ENCODE measurements at regions of chr7 and their contacts with region 1.

Region 1: DNA sequence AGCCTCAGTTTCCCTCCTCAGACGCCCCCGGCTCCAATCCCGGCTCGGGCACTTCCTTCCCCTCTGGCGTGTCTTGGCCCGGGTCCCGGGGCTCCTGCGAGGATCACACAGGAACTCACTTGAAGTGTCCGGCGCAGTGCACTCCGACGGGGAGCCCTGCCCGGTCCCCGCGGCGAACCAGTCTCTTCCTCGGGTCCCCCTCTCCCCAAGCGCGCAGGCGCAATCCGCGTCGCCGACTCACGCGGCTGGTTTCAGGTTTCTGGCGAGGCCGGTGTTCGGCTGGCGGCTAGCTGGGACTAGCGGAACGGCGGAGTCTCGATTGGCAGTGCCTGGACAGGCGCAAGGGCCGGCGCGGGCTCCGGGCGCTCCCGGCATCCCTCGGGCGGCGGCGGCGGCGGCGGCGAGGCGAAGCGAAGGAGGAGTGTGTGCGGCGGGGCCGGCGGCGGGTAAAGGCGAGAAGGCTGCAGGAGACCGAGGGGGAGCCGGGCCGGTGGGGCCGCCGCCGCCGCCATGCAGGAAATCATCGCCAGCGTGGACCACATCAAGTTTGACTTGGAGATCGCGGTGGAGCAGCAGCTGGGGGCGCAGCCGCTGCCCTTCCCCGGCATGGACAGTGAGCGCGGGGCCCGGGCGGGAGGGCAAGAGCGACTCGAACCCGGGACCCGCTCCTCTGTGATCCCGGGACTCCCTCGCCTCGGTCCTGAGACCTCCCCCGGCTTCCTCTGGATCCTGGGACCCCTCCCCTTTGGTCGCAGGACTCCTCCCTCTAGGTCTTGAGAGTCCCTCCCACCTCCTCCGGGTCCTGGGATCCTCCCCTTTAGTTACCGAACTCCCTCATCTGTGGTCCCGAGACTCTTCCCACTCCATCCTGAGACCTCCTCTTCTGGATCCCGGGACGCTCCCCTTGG is at the starts of genes CPSF4 and PTCD1:
- DNase-seq: peak; percentile 95 to 98 (median 97)
- ATAC-seq: peak; percentile 89 to 97 (median 96)
- H3K4me3 ChIP-seq: peak within 1 kb of the TSS; percentile 72 to 100 (median 97)
- H3K27ac ChIP-seq: peak within 1 kb of the TSS in 11 of 12 donors; percentile 79 to 93 (median 89)
- H3K4me1 ChIP-seq: peaks cover 0 to 45% (median 30%) of the 10 kb centered on the region in 12 donors
- H3K27me3 ChIP-seq: no peaks in the 10 kb centered on the region
- CTCF ChIP-seq: no peak
- POLR2A ChIP-seq: peak in 1 of 2 donors; percentile 59
- total RNA-seq, gene CPSF4: 12.7 to 24.8 (median 16.4) TPM
- total RNA-seq, gene PTCD1: 2.1 to 9.0 (median 3.9) TPM

Region 2: GRCh38 chr7:99255463-99255862 is 183.4 kb before region 1 on chr7:
- intact Hi-C with region 1: no loop called
- DNase-seq: peak in 1 of 5 donors; percentile 33
- ATAC-seq: no peak
- H3K4me3 ChIP-seq: no peak overlapping the region
- H3K27ac ChIP-seq: no peak overlapping the region
- H3K4me1 ChIP-seq: no peaks in the 10 kb centered on the region
- H3K27me3 ChIP-seq: peaks cover 0 to 6% (median 0%) of the 10 kb centered on the region in 9 donors
- CTCF ChIP-seq: no peak
- POLR2A ChIP-seq: no peak

Region 3: DNA sequence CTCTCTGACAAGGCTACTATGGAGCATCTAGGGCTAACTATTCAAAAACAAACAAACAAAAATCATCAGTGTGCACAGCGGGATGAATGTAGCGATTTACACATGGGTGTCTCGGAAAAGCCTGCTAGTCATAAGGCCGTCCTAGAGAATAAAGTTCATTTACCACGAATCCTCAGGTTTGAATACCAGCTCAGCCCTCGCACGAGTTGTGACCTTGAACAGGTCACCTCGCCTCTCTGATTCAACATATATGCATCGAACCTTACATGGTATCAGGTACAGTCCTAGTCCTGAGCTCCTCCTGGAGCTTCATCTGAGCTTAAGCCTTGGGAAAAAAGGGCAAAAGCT is 26.6 kb after region 1 on chr7:
- intact Hi-C with region 1: loop called in 1 of 10 experiments (anchors 2 kb)
- DNase-seq: no peak
- ATAC-seq: peak in 2 of 4 donors; percentile 4 to 25
- H3K4me3 ChIP-seq: peak overlapping the region; percentile 64 to 96 (median 82)
- H3K27ac ChIP-seq: peak overlapping the region; percentile 77 to 96 (median 92)
- H3K4me1 ChIP-seq: peaks cover 8 to 58% (median 29%) of the 10 kb centered on the region in 12 donors
- H3K27me3 ChIP-seq: no peaks in the 10 kb centered on the region
- CTCF ChIP-seq: no peak
- POLR2A ChIP-seq: no peak

Region 4: GRCh38 chr7:99489235-99489634 is 50.4 kb after region 1 on chr7:
- intact Hi-C with region 1: no loop called
- DNase-seq: no peak
- ATAC-seq: no peak
- H3K4me3 ChIP-seq: no peak overlapping the region
- H3K27ac ChIP-seq: no peak overlapping the region
- H3K4me1 ChIP-seq: no peaks in the 10 kb centered on the region
- H3K27me3 ChIP-seq: no peaks in the 10 kb centered on the region
- CTCF ChIP-seq: no peak
- POLR2A ChIP-seq: no peak

Region 5: DNA sequence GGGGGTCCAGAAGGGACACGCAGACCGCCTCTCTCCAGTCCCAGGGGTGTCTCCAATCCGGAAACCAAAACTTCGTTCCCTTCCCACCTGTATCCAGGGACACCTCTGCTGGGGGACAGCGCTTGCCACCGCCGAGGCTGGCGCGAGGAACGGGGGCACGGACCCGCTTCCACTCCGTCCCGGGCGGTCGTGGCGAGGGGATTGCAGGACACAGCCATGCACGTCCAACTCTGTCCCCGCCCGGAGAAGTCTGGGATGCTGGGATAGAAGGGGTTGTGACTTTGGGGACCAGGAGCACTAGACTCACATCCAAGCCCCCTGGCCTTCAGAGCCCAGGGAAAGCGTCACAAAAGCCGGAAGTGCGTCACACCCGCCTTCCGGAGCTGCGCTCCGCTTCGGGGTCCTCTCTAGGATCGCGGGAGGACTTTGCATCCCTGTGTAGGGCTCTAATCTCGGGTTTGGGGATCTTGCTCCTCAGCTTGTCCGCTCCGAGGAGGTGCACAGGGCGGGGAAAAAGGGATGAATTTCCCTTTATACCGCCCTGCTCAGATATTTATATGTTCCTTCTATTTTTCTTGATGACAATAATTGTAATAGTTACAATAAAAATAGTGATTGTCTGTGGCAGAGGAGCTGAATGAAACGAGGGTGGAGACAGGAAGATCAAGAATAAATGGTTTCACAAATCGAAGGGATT is 113.1 kb after region 1 on chr7 and contains the start of gene FAM200A:
- intact Hi-C with region 1: loop called in 1 of 10 experiments (anchors 10 kb)
- DNase-seq: peak; percentile 91 to 94 (median 93)
- ATAC-seq: peak; percentile 98 to 100 (median 98)
- H3K4me3 ChIP-seq: peak within 1 kb of the TSS; percentile 54 to 99 (median 83)
- H3K27ac ChIP-seq: peak within 1 kb of the TSS; percentile 6 to 95 (median 86)
- H3K4me1 ChIP-seq: peaks cover 0 to 26% (median 15%) of the 10 kb centered on the region in 12 donors
- H3K27me3 ChIP-seq: no peaks in the 10 kb centered on the region
- CTCF ChIP-seq: no peak
- POLR2A ChIP-seq: peak in 1 of 2 donors; percentile 72
- total RNA-seq, gene FAM200A: 4.7 to 7.1 (median 5.3) TPM

Measured in heart left ventricle (tissue), 16 donors.